Heart left ventricle (tissue), 16 donors: ENCODE measurements at regions of chr10 and their contacts with region 1.

Region 1: GRCh38 chr10:127715782-127716378 is 21.1 kb upstream of the FOXI2 start:
- DNase-seq: no peak
- ATAC-seq: no peak
- H3K4me3 ChIP-seq: no peak overlapping the region
- H3K27ac ChIP-seq: no peak overlapping the region
- H3K4me1 ChIP-seq: no peaks in the 10 kb centered on the region
- H3K27me3 ChIP-seq: peaks cover 0 to 11% (median 0%) of the 10 kb centered on the region in 9 donors
- CTCF ChIP-seq: peak in 11 of 12 donors; percentile 17 to 67 (median 51)
- POLR2A ChIP-seq: no peak

Region 2: GRCh38 chr10:127813290-127813689 is 97.4 kb after region 1 on chr10:
- intact Hi-C with region 1: loop called in 1 of 10 experiments (anchors 10 kb)
- DNase-seq: no peak
- ATAC-seq: no peak
- H3K4me3 ChIP-seq: no peak overlapping the region
- H3K27ac ChIP-seq: no peak overlapping the region
- H3K4me1 ChIP-seq: no peaks in the 10 kb centered on the region
- H3K27me3 ChIP-seq: peaks cover 0 to 7% (median 0%) of the 10 kb centered on the region in 9 donors
- CTCF ChIP-seq: peak in 5 of 12 donors; percentile 6 to 49 (median 34)
- POLR2A ChIP-seq: no peak

Region 3: DNA sequence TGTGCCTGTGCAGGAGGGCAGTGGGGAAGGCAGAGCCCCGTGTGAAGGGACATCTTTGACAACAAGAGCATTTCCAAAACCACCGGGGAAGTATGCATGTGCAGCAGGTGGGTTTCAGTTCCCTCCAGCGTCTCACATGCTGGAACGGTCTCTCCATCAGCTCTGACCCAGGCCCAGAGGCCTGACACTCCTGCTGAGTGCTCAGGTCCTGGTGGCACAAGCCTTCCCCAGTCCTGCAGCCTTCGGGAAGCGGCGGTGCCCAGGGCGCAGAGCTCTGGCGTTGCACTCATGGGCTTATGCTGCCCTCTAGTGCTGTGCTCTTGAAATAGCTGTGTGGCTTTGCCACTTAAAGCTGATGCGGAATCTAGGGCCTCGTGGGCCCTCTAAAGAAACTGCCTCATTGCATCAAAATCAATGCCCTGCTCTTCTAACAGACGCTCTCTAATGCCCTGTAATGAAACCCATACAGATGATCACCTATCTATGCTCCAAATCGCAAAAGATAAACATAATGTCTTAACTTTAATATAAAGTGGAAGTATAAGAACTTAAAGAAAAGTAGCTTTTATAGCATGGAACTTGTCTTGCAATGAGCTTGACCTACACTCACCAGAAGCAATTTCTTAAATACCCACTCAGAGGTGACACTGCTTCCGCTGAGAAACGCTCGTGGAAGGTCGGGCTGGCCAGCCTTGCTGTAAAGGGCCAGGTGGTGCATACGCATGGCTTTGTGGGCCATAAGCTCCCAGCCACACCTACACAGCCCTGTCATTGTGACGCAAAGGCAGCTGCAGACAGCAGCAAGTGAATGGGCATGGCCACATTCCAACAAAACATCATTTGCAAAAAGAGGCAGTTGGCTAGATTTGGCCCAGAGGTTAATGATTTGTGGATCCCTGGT is 138.2 kb after region 1 on chr10:
- intact Hi-C with region 1: loop called (anchors 1 to 5 kb)
- DNase-seq: peak; percentile 59 to 84 (median 68)
- ATAC-seq: peak; percentile 72 to 94 (median 92)
- H3K4me3 ChIP-seq: no peak overlapping the region
- H3K27ac ChIP-seq: no peak overlapping the region
- H3K4me1 ChIP-seq: peaks cover 0 to 9% (median 0%) of the 10 kb centered on the region in 12 donors
- H3K27me3 ChIP-seq: peaks cover 0 to 17% (median 0%) of the 10 kb centered on the region in 9 donors
- CTCF ChIP-seq: peak; percentile 74 to 93 (median 84)
- POLR2A ChIP-seq: no peak

Region 4: GRCh38 chr10:128011175-128011979 is 295.5 kb after region 1 on chr10:
- intact Hi-C with region 1: loop called in 5 of 10 experiments (anchors 2 to 10 kb)
- DNase-seq: peak; percentile 83 to 93 (median 86)
- ATAC-seq: peak; percentile 73 to 88 (median 86)
- H3K4me3 ChIP-seq: peak overlapping the region in 2 of 12 donors; percentile 1 to 2
- H3K27ac ChIP-seq: peak overlapping the region in 1 of 12 donors; percentile 39
- H3K4me1 ChIP-seq: peaks cover 0 to 31% (median 17%) of the 10 kb centered on the region in 12 donors
- H3K27me3 ChIP-seq: no peaks in the 10 kb centered on the region
- CTCF ChIP-seq: peak; percentile 98 to 100 (median 99)
- POLR2A ChIP-seq: no peak

Region 5: DNA sequence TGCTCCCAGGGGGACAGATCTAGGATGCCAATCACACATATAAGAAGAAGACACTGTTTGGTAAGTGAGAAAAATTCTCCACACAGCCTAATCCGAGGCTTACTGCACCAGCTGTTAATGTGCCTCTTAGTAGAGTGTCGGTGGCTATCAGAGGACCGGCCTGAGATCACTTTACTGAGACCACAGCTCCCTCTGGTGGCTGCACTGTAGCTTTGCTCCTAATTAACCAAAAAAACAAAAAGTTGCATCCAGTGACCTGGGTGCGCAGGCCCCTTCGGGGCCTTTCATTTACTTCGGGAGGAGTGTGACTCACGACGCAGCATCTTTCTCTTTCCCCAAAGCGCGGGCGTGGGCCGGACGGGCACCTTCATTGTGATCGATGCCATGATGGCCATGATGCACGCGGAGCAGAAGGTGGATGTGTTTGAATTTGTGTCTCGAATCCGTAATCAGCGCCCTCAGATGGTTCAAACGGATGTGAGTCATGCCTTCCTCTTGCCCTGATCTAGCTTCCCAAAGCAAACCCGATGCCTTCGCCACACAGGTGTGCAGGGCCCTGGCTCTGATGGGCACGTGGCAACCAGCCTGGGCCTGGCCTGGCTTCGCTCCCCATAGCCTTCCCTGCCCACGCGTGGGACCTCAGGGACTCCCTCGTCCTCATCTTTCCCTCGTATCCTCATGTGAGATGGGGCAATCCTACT is 353.6 kb after region 1 on chr10:
- intact Hi-C with region 1: loop called in 2 of 10 experiments (anchors 2 to 5 kb)
- DNase-seq: peak; percentile 70 to 85 (median 83)
- ATAC-seq: peak; percentile 50 to 68 (median 66)
- H3K4me3 ChIP-seq: no peak overlapping the region
- H3K27ac ChIP-seq: no peak overlapping the region
- H3K4me1 ChIP-seq: peaks cover 0 to 31% (median 2%) of the 10 kb centered on the region in 12 donors
- H3K27me3 ChIP-seq: no peaks in the 10 kb centered on the region
- CTCF ChIP-seq: peak; percentile 74 to 88 (median 84)
- POLR2A ChIP-seq: no peak

Region 6: DNA sequence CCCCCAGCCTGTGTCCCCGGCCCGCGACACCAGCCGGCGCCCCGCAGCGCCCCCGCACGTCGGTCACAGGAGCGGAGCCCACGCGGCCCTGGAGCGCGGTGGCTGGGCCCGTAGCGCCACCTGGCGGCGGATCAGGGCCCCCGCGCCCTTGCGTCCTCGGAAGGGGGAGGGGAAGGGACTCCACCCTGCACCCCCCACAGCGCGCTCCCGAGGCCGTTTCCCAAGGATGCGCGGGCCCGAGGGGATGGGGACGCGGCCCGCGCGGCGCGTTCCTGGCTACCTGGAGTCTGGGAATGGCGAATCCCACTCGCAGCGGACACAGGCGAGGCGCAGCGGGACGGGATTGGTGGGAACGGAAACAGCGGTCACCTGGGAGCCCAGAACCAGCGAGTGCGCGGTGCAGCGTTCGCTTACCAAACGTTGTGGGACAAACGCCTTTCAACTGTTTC is 434.2 kb after region 1 on chr10:
- intact Hi-C with region 1: loop called in 3 of 10 experiments (anchors 5 to 10 kb)
- DNase-seq: peak; percentile 50 to 87 (median 61)
- ATAC-seq: peak; percentile 58 to 97 (median 96)
- H3K4me3 ChIP-seq: peak overlapping the region in 11 of 12 donors; percentile 22 to 65 (median 50)
- H3K27ac ChIP-seq: no peak overlapping the region
- H3K4me1 ChIP-seq: peaks cover 0 to 12% (median 3%) of the 10 kb centered on the region in 12 donors
- H3K27me3 ChIP-seq: peaks cover 0 to 38% (median 10%) of the 10 kb centered on the region in 9 donors
- CTCF ChIP-seq: peak; percentile 68 to 87 (median 76)
- POLR2A ChIP-seq: no peak